ENCODE measurements at regions of chr9 and their contacts with region 1.

Region 1: GRCh38 chr9:131755541-131756198 is 15.8 kb upstream of the RAPGEF1 start:
- DNase-seq: peak; percentile 66 to 93 (median 84)
- ATAC-seq: peak; percentile 99 to 100 (median 100)
- H3K4me3 ChIP-seq: no peak overlapping the region
- H3K4me3 Mint-ChIP-seq: no peak overlapping the region
- H3K27ac ChIP-seq: no peak overlapping the region
- H3K27ac Mint-ChIP-seq: peak overlapping the region; percentile 42 to 62
- H3K4me1 ChIP-seq: peaks cover 0 to 13% of the 10 kb centered on the region in 2 experiments
- H3K4me1 Mint-ChIP-seq: peaks cover 4 to 7% (median 5%) of the 10 kb centered on the region in 3 donors
- H3K27me3 ChIP-seq: peaks cover 0 to 27% of the 10 kb centered on the region in 2 experiments
- H3K27me3 Mint-ChIP-seq: peaks cover 0 to 4% of the 10 kb centered on the region in 2 donors

Region 2: DNA sequence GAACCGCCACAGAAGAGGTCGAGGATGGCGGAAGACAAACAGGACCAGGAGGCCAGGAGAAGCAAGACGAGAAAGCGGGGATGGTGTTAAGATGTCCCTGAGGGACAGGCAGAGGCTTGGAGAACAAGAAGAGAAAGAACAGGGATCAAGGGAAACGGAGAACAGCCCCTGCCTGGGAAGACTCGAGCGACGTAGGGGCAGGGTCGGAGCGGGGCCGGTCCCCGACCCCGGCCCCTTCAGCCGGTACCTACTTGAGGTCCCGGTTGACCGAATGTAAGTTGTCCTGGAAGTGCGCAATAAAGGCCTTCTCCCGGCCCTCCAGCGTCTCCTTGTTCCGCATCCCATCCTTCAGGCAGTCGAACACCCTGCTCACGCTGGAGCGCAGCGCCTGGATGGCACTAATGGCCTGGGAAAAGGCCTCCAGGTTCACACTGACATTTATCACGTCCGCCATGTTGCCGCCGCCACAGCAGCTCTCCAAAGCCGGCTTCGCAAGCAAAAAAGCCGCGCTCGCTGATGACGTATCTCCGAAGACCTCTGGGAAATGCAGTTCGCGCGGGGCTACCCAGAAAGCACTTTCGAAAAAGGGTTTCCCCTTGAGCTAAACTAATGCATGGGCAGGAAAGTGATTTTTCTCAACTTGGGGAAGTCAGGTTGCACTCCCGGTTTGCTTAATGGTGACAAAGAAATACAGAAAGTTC is 323.9 kb after region 1 on chr9 and contains the start of gene MED27:
- CTCF ChIA-PET with region 1: no interaction called
- POLR2A ChIA-PET with region 1: interaction called in 1 of 2 experiments, 15 read pairs
- DNase-seq: peak; percentile 82 to 98 (median 93)
- ATAC-seq: peak; percentile 97 to 99 (median 98)
- H3K4me3 ChIP-seq: peak within 1 kb of the TSS; percentile 76 to 99
- H3K4me3 Mint-ChIP-seq: peak within 1 kb of the TSS; percentile 92 to 97 (median 97)
- H3K27ac ChIP-seq: peak within 1 kb of the TSS; percentile 37
- H3K27ac Mint-ChIP-seq: peak within 1 kb of the TSS; percentile 79 to 86
- H3K4me1 ChIP-seq: peaks cover 9 to 17% of the 10 kb centered on the region in 2 experiments
- H3K4me1 Mint-ChIP-seq: peaks cover 46 to 49% (median 49%) of the 10 kb centered on the region in 3 donors
- H3K27me3 ChIP-seq: no peaks in the 10 kb centered on the region
- H3K27me3 Mint-ChIP-seq: no peaks in the 10 kb centered on the region
- total RNA-seq, gene MED27: 15.0 to 26.7 (median 17.6) TPM

Measured in T-cell (primary cell).